Right ventricle myocardium inferior (tissue), 1 donor: ENCODE measurements at regions of chr3 and their contacts with region 1.

Region 1: GRCh38 chr3:156509189-156510174 is 45.4 kb downstream of the SSR3 start:
- DNase-seq: no peak
- ATAC-seq: peak; percentile 65

Region 2: DNA sequence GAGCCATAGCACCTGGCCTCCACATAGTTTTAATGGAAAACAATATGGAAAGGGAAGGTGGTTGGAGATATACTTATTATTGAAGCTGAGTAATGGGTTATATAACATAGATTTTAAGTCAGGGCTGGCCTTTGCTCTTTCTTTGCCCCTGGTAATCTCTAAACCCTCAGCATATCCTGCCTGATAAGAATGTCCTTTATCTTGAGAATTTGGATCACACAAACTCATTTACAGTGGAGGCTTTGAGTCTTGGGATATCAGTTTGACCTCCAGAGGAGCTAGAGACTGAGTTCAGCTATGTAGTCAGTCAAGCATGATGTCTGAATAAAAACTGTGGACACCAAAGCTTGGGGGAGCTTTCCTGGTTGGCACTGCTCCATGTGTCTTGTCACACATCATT is 694.5 kb before region 1 on chr3:
- intact Hi-C with region 1: no loop called
- DNase-seq: no peak
- ATAC-seq: no peak

Region 3: GRCh38 chr3:156050918-156051317 is 458.6 kb before region 1 on chr3:
- intact Hi-C with region 1: loop called (anchors 5 kb)
- DNase-seq: no peak
- ATAC-seq: no peak

Region 4: DNA sequence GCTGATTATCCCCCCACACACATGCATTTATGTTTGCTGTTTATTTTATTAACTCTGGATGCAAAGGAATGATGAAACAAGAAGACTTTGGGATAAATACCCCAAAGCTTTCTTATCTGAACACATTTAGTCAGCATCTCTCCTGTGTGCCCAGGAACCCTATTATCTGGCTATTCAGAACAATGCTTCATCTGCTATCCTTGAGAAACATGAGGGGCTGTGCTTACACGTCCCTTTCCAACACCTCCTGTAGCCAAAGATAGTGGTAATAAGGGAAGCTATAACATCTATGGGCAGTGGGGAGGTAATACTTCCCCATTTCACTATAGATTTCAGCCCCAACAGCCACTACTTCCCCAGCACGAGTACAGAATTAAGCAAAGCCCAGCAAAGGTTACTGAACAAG is 49.3 kb before region 1 on chr3:
- intact Hi-C with region 1: loop called (anchors 5 kb)
- DNase-seq: no peak
- ATAC-seq: no peak